GM10248 (cell line): ENCODE measurements at regions of chr14 and their contacts with region 1.

Region 1: DNA sequence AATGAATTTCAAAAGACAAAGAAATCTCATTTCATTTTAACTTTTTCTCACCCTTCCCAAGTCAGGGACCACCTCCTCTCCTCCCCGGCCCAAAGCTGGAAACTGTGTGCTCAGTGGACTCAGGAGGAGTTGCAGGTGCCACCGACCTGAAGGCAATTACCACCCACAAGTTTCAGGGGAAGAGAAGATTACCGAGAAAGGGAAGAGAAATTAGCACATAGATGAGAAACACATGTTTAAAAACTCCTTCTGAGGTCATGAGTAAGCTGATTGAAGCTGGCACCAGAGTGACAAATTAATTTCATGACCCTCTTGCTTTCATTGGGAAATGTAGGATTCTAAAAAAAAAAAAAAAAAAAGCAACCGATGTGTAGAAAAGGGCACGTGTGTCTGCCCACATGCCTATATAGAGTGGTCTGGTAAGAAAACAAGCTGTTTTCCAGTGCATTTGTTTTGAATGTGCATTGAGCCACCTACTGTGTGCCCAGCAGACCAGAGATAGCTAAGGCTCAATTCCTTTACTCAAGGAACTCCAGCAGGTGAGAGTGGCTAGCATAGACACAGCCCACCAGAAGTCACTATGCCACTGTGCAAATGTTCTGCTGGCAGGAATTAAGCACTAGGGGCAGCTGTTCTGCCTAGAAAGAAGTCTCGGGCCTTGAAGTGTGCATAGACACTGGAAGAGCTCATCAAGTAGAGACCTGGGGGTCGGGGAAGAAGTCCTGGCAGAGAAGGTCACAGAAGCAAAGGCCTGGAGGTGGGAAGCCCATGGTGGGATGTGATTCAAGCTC is 30.5 kb downstream of the DPF3 start:
- DNase-seq: peak; percentile 25
- CTCF ChIP-seq: peak; percentile 5

Region 2: DNA sequence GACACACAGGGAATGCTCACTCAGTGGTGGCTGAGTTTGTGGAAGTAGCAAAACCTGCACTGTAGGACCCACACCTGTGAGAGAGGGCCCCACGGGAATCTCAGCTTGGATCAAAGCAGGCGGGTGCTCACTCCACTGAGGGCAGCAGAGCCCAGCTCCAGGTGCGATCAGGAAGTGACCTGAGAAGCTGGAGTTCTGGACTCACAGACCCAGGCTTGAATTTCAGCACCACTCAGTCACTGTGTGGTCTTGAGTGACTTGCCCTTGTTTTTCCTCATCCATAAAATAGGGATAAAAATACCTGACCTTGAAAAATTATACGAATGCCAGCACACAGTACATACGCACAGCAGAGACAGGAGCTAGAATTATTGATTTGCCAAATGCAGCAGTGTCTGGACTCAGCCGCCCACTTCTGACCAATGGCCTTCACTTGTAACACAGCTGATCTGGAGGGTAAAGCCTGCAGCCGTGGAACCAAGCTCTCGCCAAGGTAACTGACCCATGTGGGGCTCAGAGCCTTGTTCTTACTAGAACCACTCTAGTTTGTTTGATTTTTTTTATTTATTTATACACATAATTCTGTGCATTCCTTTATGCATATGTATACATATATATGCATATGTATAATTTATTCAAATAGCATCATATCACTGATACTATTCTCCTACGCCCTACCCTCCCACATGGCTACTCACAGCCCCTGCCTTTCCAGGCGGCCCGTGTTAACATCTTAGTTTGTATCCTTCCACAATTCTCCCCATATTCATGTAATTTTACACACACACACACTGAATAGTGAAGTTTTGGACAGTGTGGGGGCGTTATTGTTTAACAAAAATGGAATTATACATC is 23.4 kb before region 1 on chr14:
- CTCF ChIA-PET with region 1: no interaction called
- POLR2A ChIA-PET with region 1: no interaction called
- DNase-seq: no peak
- CTCF ChIP-seq: no peak

Region 3: GRCh38 chr14:72850360-72850759 is 13.1 kb before region 1 on chr14:
- CTCF ChIA-PET with region 1: interaction called, 10 read pairs
- POLR2A ChIA-PET with region 1: no interaction called
- DNase-seq: no peak
- CTCF ChIP-seq: no peak

Region 4: GRCh38 chr14:72898448-72898847 is 35.0 kb after region 1 on chr14:
- CTCF ChIA-PET with region 1: no interaction called
- POLR2A ChIA-PET with region 1: no interaction called
- DNase-seq: no peak
- CTCF ChIP-seq: no peak